Heart left ventricle (tissue), 16 donors: ENCODE measurements at regions of chr16 and their contacts with region 1.

Region 1: DNA sequence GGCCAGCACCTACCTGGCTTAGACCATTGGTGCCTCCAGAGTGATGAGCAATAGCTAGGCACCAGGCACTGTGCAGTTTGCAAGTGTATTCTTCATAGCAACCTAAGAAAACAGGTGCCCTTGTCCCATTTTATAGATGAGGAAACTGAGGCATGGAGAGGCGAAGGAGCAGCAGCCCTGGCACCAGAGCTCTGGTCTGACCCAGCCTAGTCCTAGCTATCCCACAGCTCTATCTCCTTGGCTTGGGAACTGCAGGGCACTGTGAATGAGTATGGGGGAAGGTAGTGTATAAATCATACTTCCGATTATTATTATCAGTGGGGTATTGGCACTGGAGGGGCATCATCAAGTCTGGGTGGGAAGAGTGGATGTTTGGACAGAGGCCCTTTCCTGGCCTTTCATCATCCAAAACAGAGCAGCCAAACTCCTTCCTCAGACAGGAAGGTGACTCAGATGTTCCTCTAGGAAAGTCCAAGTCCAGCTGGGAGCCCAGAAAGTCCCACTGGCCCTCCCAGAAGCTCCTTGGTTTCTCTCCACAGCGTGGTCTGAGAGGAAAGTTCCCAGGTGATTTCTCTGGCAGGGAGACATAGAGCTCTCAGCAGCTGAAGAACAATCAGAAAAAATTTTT is 32.0 kb upstream of the PLLP start:
- DNase-seq: peak in 4 of 5 donors; percentile 51 to 77 (median 72)
- ATAC-seq: peak; percentile 62 to 93 (median 90)
- H3K4me3 ChIP-seq: no peak overlapping the region
- H3K27ac ChIP-seq: peak overlapping the region; percentile 25 to 87 (median 76)
- H3K4me1 ChIP-seq: peaks cover 0 to 44% (median 33%) of the 10 kb centered on the region in 12 donors
- H3K27me3 ChIP-seq: no peaks in the 10 kb centered on the region
- CTCF ChIP-seq: no peak
- POLR2A ChIP-seq: no peak

Region 2: DNA sequence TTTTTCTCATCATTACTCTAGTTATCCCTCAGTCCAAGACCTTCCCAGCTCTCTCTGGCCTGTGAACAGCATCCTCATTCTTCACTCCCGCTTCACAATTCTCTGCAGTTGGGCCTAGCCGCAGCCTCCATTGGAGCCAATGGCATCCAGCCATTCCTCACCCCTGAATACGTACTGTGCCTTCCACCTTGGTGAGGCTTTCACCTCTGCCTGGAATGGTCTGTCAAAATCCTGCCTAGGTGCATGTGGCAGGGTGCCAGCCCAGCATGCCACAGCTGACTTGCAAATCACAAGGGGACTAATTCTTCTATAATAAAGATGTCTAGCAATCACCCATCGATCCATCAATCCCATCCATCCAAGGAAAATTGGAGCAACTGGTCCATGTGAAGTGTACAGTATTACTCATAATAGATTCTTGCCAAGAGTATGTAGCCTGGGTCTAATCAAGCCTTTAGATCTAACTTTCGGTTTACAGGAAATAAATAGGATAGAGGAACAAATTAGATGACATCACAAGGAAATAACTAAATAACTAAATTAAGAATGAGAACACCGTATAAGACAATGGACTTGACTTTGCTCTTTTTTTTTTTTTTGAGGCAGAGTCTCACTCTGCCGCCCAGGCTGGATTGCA is 50.7 kb after region 1 on chr16:
- intact Hi-C with region 1: loop called in 4 of 10 experiments (anchors 5 to 10 kb)
- DNase-seq: no peak
- ATAC-seq: peak in 2 of 4 donors; percentile 28 to 74
- H3K4me3 ChIP-seq: no peak overlapping the region
- H3K27ac ChIP-seq: peak overlapping the region in 10 of 12 donors; percentile 23 to 74 (median 57)
- H3K4me1 ChIP-seq: peaks cover 0 to 31% (median 18%) of the 10 kb centered on the region in 12 donors
- H3K27me3 ChIP-seq: no peaks in the 10 kb centered on the region
- CTCF ChIP-seq: no peak
- POLR2A ChIP-seq: no peak

Region 3: GRCh38 chr16:57394444-57394843 is 77.9 kb after region 1 on chr16:
- intact Hi-C with region 1: no loop called
- DNase-seq: peak in 2 of 5 donors; percentile 50 to 57
- ATAC-seq: peak; percentile 65 to 91 (median 73)
- H3K4me3 ChIP-seq: no peak overlapping the region
- H3K27ac ChIP-seq: peak overlapping the region in 1 of 12 donors; percentile 33
- H3K4me1 ChIP-seq: peaks cover 0 to 21% (median 12%) of the 10 kb centered on the region in 12 donors
- H3K27me3 ChIP-seq: no peaks in the 10 kb centered on the region
- CTCF ChIP-seq: no peak
- POLR2A ChIP-seq: no peak